Left colon (tissue), 2 donors: ENCODE measurements at regions of chr1 and their contacts with region 1.

Region 1: DNA sequence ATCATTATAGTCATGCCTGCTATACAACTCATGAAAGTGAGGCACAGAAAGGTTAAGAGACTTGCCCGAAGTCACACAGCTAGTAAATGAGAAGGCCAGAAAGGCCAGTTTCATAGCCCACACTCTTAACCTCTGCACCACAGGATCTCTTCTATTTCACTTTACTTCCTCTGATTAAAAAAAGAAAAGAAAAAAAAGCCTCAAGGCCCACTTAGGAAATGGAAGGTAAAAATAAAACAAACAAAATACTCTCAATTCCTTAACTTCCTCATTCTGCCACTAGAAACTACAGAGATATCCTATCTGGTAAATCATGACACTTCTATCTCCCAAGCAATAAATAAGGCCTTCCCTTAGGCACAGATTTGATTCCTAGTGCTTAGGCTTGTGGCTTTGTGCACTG is 7.6 kb upstream of the ENAH start:
- DNase-seq: no peak
- ATAC-seq: no peak

Region 2: GRCh38 chr1:225242623-225243022 is 417.9 kb before region 1 on chr1:
- intact Hi-C with region 1: no loop called
- DNase-seq: no peak
- ATAC-seq: no peak

Region 3: GRCh38 chr1:225766967-225767633 is 106.6 kb after region 1 on chr1:
- intact Hi-C with region 1: loop called in 1 of 2 experiments (anchors 10 kb)
- DNase-seq: peak in 1 of 2 donors; percentile 56
- ATAC-seq: peak; percentile 26

Region 4: GRCh38 chr1:226407497-226408284 is 747.1 kb after region 1 on chr1 and contains the start of gene PARP1:
- intact Hi-C with region 1: no loop called
- DNase-seq: peak; percentile 88 to 90
- ATAC-seq: peak; percentile 90
- total RNA-seq, gene PARP1: 44.8 to 48.9 TPM